ENCODE measurements at regions of chrX and their contacts with region 1.

Region 1: GRCh38 chrX:53330331-53330730 is 48.9 kb upstream of the IQSEC2 start:
- DNase-seq: no peak
- ATAC-seq: no peak
- H3K4me3 ChIP-seq: no peak overlapping the region
- H3K27ac ChIP-seq: no peak overlapping the region
- H3K4me1 ChIP-seq: no peaks in the 10 kb centered on the region; a peak in 1 of 5 replicates
- H3K27me3 ChIP-seq: peaks cover 8 to 56% of the 10 kb centered on the region in 2 experiments; a peak in 3 of 5 replicates
- CTCF ChIP-seq: no peak
- EP300 ChIP-seq: no peak
- POLR2A ChIP-seq: no peak
- RAD21 ChIP-seq: no peak

Region 2: DNA sequence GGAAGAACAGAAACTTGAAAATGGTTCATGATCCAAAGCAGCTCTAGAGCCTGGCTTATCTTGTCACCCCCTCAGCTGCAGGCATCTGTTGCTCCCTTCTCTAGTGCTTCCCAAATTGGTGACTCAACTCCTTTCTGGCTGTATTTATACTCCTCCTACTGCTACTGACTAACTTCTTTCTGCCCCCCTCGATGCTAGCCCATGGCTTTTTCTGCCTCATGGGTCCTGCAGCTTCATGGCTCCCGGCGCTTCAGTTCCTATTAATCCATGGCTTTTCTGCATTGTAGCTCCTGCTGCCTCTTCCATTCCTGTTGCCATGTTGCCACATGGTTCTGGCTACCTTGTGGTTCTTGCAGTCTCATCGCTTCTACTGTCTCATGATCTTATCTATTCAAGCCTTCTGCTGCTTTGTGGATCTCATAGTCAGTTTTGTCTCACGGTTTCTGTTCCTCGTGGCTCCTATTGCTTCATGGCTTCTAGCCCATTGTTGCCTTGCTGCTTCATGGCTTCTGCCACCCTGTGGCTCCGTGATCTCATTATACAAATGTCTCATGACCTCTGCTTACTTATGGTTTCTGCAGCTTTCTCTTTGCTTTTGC is 44.0 kb after region 1 on chrX:
- CTCF ChIA-PET with region 1: no interaction called
- POLR2A ChIA-PET with region 1: no interaction called
- in situ Hi-C with region 1: no loop called
- intact Hi-C with region 1: loop called (anchors 5 kb)
- DNase-seq: peak; percentile 69 to 81 (median 76)
- ATAC-seq: peak; percentile 86
- H3K4me3 ChIP-seq: peak overlapping the region; percentile 12; the same call in 1 of the 2 replicates
- H3K27ac ChIP-seq: peak overlapping the region; percentile 99
- H3K4me1 ChIP-seq: peaks cover 10 to 30% of the 10 kb centered on the region in 2 experiments
- H3K27me3 ChIP-seq: no peaks in the 10 kb centered on the region
- CTCF ChIP-seq: peak in 2 of 3 experiments; percentile 4 to 15; a peak in 1 of 6 replicates
- EP300 ChIP-seq: peak; percentile 54
- POLR2A ChIP-seq: peak; percentile 63; the same call in 1 of the 2 replicates
- RAD21 ChIP-seq: peak in 1 of 2 experiments; percentile 24; a peak in 1 of 4 replicates

Region 3: DNA sequence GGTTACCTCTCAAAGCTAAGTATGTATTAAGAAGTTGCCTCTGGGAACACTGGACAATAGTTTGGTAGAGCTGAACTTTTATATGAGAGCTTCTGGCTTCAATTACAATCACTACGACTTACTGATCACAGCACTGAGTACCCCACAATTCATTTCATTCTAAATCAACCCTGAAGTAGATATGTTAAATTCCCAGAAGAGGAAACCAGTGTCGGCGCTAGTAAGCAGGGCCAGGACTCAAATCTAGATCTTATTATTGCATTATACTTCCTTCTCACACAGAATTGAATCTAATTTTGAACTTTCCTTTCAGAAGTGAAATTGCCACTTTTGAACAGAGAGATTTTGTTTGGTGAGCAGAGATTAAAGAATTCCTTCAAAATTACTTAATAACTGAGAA is 314.4 kb after region 1 on chrX:
- CTCF ChIA-PET with region 1: no interaction called
- POLR2A ChIA-PET with region 1: no interaction called
- in situ Hi-C with region 1: no loop called
- intact Hi-C with region 1: no loop called
- DNase-seq: no peak
- ATAC-seq: no peak
- H3K4me3 ChIP-seq: no peak overlapping the region
- H3K27ac ChIP-seq: no peak overlapping the region
- H3K4me1 ChIP-seq: no peaks in the 10 kb centered on the region
- H3K27me3 ChIP-seq: no peaks in the 10 kb centered on the region
- CTCF ChIP-seq: no peak
- EP300 ChIP-seq: no peak
- POLR2A ChIP-seq: no peak
- RAD21 ChIP-seq: no peak

Measured in K562 (cell line).